Gastrocnemius medialis (tissue), 4 donors: ENCODE measurements at regions of chr4 and their contacts with region 1.

Region 1: DNA sequence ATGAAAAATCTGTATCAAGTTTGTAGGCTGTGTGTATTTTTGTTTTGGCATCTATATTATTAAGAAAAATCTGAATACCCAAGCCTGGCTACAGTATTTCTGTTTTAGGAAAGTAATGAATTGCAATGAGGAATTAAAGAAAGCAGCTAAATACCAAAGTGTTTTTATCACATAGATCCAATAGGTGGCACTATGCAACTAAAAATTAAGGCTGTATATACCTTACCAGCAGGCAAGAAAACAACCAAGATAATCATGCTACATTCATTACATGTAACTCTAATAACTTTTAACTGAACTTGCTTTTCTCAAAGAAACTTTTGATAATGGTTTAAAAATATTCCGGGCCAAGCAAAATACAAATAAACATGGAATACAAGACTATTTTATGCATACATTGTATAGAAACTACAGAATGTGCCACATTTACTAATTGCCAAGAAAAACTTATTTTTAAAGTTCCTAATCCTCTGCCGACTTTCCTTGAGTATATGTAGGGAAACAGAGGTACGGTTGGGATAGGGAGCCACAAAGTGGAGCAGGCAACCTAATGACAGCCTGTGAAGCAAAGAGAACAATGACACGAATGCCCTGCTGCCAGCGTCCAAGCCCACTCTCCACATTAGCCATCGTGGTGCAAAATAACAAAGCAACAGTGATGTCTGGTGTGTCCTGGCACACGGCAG is 63.7 kb downstream of the SEC24D start:
- DNase-seq: no peak
- ATAC-seq: peak; percentile 89
- H3K4me3 ChIP-seq: peak overlapping the region in 2 of 4 donors; percentile 2 to 21
- H3K27ac ChIP-seq: peak overlapping the region in 2 of 4 donors; percentile 11 to 36
- H3K4me1 ChIP-seq: peaks cover 12 to 18% of the 10 kb centered on the region in 2 donors
- H3K27me3 ChIP-seq: no peaks in the 10 kb centered on the region
- CTCF ChIP-seq: peak; percentile 54 to 84 (median 60)
- POLR2A ChIP-seq: no peak

Region 2: GRCh38 chr4:118835571-118836300 is 63.5 kb after region 1 on chr4 and contains the start of gene SEC24D:
- in situ Hi-C with region 1: no loop called
- intact Hi-C with region 1: loop called (anchors 2 kb)
- DNase-seq: peak; percentile 71 to 77
- ATAC-seq: peak; percentile 91 to 92
- H3K4me3 ChIP-seq: peak within 1 kb of the TSS; percentile 71 to 99 (median 92)
- H3K27ac ChIP-seq: peak within 1 kb of the TSS; percentile 81 to 97 (median 94)
- H3K4me1 ChIP-seq: peaks cover 14 to 16% of the 10 kb centered on the region in 2 donors
- H3K27me3 ChIP-seq: no peaks in the 10 kb centered on the region
- CTCF ChIP-seq: peak in 2 of 5 experiments; percentile 30 to 42
- POLR2A ChIP-seq: peak; percentile 75 to 79
- total RNA-seq, gene SEC24D: 8.9 to 16.2 (median 10.4) TPM

Region 3: DNA sequence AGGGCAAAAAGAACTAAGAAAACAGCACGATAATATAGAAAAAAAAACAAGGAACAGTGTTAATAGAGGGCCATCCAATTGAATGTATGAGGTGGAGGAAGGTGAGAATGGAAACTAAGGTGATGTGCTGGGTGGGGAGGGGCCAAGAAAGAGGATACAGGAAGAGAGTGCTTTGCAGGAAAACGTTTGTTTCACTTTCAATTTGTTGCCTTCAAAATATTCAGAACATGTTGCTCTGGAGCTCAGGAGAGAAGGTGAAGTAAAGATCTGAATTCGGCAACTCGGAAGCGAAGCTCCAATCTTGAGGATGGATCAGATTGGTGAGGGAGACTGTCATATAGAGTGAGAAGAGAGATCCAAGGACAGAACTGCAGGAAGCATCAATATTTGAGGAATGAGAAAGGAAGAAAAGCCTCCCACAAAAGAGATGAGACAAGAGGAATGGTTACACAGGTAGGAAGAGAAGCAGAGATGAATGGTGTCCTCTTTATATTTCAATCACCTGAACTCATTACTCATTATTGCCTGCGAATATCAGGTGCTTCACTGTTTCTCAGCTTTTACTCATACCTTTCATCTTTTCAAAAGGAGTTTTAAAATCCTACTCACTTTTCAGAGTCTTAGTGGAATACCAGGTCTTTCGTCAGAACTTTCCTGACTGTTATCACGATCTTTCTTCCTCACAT is 78.4 kb after region 1 on chr4:
- in situ Hi-C with region 1: no loop called
- intact Hi-C with region 1: no loop called
- DNase-seq: no peak
- ATAC-seq: no peak
- H3K4me3 ChIP-seq: peak overlapping the region; percentile 39 to 48 (median 45)
- H3K27ac ChIP-seq: peak overlapping the region in 1 of 4 donors; percentile 46
- H3K4me1 ChIP-seq: no peaks in the 10 kb centered on the region
- H3K27me3 ChIP-seq: no peaks in the 10 kb centered on the region
- CTCF ChIP-seq: no peak
- POLR2A ChIP-seq: no peak

Region 4: DNA sequence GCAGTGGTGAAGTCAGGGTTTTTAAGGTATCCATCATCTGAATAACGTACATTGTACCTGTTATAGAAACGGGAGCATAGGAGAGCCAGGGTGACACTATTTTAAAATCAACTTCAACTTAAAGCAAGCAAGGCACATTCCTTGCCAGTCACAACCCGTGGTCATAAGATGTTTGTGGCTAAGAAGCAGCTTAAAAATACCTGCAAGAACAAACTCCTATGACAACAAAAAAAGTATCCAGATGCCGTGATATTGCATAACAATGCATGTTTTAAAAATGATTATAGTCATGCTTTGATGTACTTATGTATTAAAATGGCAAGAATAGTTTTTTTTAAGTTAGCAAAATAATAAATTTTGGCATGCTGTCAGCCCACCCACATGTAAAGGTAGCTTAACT is 100.0 kb after region 1 on chr4:
- in situ Hi-C with region 1: no loop called
- intact Hi-C with region 1: no loop called
- DNase-seq: no peak
- ATAC-seq: no peak
- H3K4me3 ChIP-seq: no peak overlapping the region
- H3K27ac ChIP-seq: no peak overlapping the region
- H3K4me1 ChIP-seq: no peaks in the 10 kb centered on the region
- H3K27me3 ChIP-seq: no peaks in the 10 kb centered on the region
- CTCF ChIP-seq: no peak
- POLR2A ChIP-seq: no peak

Region 5: GRCh38 chr4:118888666-118889311 is 116.6 kb after region 1 on chr4 and contains the start of gene SYNPO2:
- in situ Hi-C with region 1: loop called in 2 of 4 experiments (anchors 10 kb)
- intact Hi-C with region 1: loop called (anchors 2 kb)
- DNase-seq: peak; percentile 48 to 73
- ATAC-seq: peak; percentile 67 to 69
- H3K4me3 ChIP-seq: peak within 1 kb of the TSS; percentile 51 to 78 (median 66)
- H3K27ac ChIP-seq: peak within 1 kb of the TSS; percentile 72 to 88 (median 85)
- H3K4me1 ChIP-seq: peaks cover 28 to 36% of the 10 kb centered on the region in 2 donors
- H3K27me3 ChIP-seq: no peaks in the 10 kb centered on the region
- CTCF ChIP-seq: no peak
- POLR2A ChIP-seq: peak; percentile 10 to 54
- total RNA-seq, gene SYNPO2: 998 to 4,186 (median 1,764) TPM

Region 6: GRCh38 chr4:118968005-118968404 is 195.8 kb after region 1 on chr4:
- in situ Hi-C with region 1: loop called in 3 of 4 experiments (anchors 5 to 10 kb)
- intact Hi-C with region 1: loop called (anchors 1 kb)
- DNase-seq: peak; percentile 87 to 91
- ATAC-seq: peak; percentile 82 to 83
- H3K4me3 ChIP-seq: peak overlapping the region in 3 of 4 donors; percentile 24 to 36 (median 33)
- H3K27ac ChIP-seq: peak overlapping the region; percentile 87 to 99 (median 92)
- H3K4me1 ChIP-seq: peaks cover 55 to 63% of the 10 kb centered on the region in 2 donors
- H3K27me3 ChIP-seq: no peaks in the 10 kb centered on the region
- CTCF ChIP-seq: no peak
- POLR2A ChIP-seq: no peak

Region 7: DNA sequence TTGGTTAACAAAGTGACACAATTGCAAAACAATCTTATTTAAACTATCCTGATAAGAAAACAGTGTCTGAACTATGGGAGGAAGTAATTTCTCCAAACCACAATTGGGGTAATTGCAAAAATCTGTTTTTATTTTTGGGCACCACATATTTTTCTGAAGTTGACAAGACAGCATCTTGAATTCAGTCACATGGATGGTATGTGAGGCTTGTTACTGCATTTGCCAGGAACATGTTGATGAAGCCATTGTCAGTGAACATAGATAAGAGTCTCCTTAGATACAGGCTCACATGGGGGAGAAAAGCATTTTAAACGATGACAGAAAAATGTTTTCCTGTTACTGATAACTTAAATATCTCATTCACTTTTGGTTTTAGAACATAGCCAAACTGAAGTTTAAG is 434.8 kb after region 1 on chr4:
- in situ Hi-C with region 1: no loop called
- intact Hi-C with region 1: no loop called
- DNase-seq: no peak
- ATAC-seq: no peak
- H3K4me3 ChIP-seq: no peak overlapping the region
- H3K27ac ChIP-seq: peak overlapping the region in 3 of 4 donors; percentile 8 to 76 (median 72)
- H3K4me1 ChIP-seq: peaks cover 24 to 31% of the 10 kb centered on the region in 2 donors
- H3K27me3 ChIP-seq: no peaks in the 10 kb centered on the region
- CTCF ChIP-seq: no peak
- POLR2A ChIP-seq: no peak

Region 8: DNA sequence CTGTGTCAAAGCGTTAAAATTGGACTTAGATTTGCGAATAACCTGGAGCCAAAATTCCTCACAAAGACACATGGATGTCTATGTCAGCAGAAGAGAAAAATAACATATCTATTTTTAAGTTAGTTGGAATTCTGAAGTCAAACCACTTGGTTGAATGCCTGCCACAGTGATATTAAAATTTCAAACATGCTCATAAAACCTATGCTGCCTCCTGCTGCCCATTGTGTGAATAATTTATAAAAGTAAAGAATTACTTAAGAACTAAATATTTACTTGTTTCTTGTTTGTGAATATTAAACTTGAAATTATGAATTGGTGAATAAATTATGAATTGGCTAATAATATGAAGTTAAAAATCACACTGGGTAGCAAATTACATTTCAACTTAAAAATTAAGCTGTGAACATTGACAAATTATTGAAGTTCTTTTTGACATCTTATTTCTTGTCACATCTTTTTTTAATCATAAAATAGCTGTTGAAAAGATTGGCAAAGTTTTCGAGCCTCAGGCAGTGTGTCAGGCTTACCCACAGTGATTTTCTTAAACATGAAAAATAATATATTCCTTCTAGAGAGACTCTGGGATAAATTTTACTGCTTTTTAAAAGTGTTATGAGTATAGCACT is 514.3 kb after region 1 on chr4:
- in situ Hi-C with region 1: loop called in 2 of 4 experiments (anchors 25 kb)
- intact Hi-C with region 1: no loop called
- DNase-seq: peak in 1 of 2 donors; percentile 28
- ATAC-seq: peak; percentile 73 to 80
- H3K4me3 ChIP-seq: peak overlapping the region in 1 of 4 donors; percentile 6
- H3K27ac ChIP-seq: peak overlapping the region; percentile 64 to 77 (median 69)
- H3K4me1 ChIP-seq: peaks cover 57 to 62% of the 10 kb centered on the region in 2 donors
- H3K27me3 ChIP-seq: no peaks in the 10 kb centered on the region
- CTCF ChIP-seq: peak; percentile 48 to 77 (median 64)
- POLR2A ChIP-seq: no peak